ENCODE measurements at regions of chr4 and their contacts with region 1.

Region 1: DNA sequence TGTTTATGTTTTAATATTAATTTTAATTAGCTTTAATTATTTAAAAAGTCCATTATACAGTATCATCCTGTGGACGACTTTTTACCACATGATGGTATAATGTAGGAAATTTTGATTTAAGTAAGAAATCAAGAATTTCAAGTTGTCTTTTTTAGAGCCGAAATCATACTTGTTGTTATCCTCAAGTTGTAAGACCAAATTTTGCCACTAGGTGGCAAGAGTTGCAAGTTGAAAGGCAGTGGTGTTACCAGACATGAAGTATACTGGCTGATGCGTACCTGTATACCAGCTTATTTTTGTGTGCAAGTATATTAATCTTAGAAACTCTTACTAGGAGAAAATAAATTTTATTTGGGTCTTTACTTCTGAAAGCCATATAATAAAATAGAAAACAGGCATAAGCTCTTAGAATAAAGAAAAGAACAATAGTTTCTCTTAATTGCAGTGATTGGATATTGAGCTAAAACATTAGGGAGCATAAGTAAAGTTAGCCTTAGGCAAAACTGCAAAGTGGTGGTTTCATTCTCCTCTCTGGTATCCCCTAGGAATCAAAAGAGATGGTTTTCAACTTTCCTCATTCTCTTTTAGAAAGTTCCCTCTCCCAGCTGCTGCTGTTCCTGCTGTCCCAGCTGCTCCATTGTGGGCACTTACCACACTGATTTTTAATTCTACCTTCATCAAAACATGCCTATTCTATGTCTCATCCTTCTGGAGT is 118.0 kb upstream of the WDFY3 start:
- DNase-seq: peak; percentile 77
- H3K4me3 Mint-ChIP-seq: no peak overlapping the region
- H3K27ac Mint-ChIP-seq: no peak overlapping the region
- H3K4me1 Mint-ChIP-seq: no peaks in the 10 kb centered on the region
- H3K27me3 Mint-ChIP-seq: no peaks in the 10 kb centered on the region

Region 2: GRCh38 chr4:84750253-84750959 is 334.1 kb before region 1 on chr4:
- intact Hi-C with region 1: no loop called
- DNase-seq: no peak
- H3K4me3 Mint-ChIP-seq: no peak overlapping the region
- H3K27ac Mint-ChIP-seq: no peak overlapping the region
- H3K4me1 Mint-ChIP-seq: no peaks in the 10 kb centered on the region
- H3K27me3 Mint-ChIP-seq: peaks cover 2% of the 10 kb centered on the region

Region 3: DNA sequence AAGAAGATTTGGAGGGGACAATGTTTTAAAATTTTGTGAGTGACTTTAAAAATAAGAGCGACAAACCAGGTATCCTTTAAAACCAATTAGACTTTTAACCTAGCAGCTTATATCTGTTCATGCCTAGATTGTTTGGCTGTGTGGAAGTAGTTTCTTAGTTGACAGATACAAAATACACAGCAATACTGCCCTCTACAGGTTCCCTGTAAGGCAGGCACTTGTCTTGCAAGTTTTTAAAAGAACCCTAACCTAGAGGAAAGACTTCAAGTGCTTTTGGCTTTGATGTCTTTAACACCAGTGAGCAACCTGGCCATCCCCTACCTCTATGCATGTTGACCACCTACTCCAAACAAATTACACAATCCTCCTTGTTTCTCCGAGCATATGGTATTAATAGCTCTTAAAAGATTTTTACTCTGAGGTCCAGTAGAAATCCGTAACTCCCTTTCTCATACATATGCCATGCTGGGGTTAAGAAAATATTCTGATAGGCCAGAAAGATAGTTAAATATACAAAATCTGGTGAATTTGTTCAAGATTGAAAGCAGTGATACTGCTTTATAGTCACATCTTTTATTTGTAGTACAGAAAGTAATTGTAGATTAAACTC is 663.5 kb after region 1 on chr4:
- intact Hi-C with region 1: loop called (anchors 5 kb)
- DNase-seq: peak; percentile 61
- H3K4me3 Mint-ChIP-seq: no peak overlapping the region
- H3K27ac Mint-ChIP-seq: no peak overlapping the region
- H3K4me1 Mint-ChIP-seq: no peaks in the 10 kb centered on the region
- H3K27me3 Mint-ChIP-seq: no peaks in the 10 kb centered on the region

Measured in activated CD4-positive, alpha-beta T cell treated with anti-CD3 and anti-CD28 coated beads, Interleukin-2, amount 10 ng/mL, durations not matched to agents 24 days and 14 days (primary cell).